Naive thymus-derived CD4-positive, alpha-beta T cell (primary cell): ENCODE measurements at regions of chr4 and their contacts with region 1.

Region 1: GRCh38 chr4:184263910-184264732 is 46.4 kb upstream of the ENPP6 start:
- DNase-seq: peak; percentile 80 to 90 (median 87)
- ATAC-seq: peak; percentile 86
- H3K4me3 ChIP-seq: no peak overlapping the region
- H3K4me3 Mint-ChIP-seq: peak overlapping the region in 1 of 10 donors; percentile 17
- H3K27ac ChIP-seq: no peak overlapping the region
- H3K27ac Mint-ChIP-seq: peak overlapping the region in 6 of 9 donors; percentile 5 to 72 (median 63)
- H3K4me1 ChIP-seq: peaks cover 6 to 14% of the 10 kb centered on the region in 2 donors
- H3K4me1 Mint-ChIP-seq: peaks cover 5 to 54% (median 28%) of the 10 kb centered on the region in 7 donors
- H3K27me3 ChIP-seq: no peaks in the 10 kb centered on the region
- H3K27me3 Mint-ChIP-seq: peaks cover 0 to 2% (median 0%) of the 10 kb centered on the region in 5 donors

Region 2: DNA sequence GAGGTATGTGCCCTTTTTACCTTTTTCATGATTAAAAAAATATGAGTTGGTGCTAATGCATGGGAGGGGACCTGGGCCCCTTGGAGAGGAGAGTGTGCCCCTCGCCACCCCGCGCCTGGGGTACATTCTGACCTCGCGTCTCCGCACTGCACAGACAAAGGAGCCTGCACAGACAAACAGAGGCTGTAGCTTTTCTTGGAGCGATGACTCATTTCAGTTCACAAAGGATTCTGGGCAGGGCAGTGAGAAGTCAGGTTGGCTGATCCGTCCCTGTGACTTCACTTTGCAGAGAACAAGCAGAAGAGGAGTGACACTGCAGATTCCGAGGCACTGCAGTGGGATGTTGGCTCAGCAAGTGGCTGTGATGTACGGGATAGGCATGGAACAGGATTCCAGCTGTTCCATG is 276.1 kb before region 1 on chr4:
- CTCF ChIA-PET with region 1: no interaction called
- POLR2A ChIA-PET with region 1: no interaction called
- intact Hi-C with region 1: no loop called
- DNase-seq: no peak
- ATAC-seq: peak; percentile 71
- H3K4me3 ChIP-seq: no peak overlapping the region
- H3K4me3 Mint-ChIP-seq: peak overlapping the region in 1 of 10 donors; percentile 10
- H3K27ac ChIP-seq: no peak overlapping the region
- H3K27ac Mint-ChIP-seq: no peak overlapping the region
- H3K4me1 ChIP-seq: no peaks in the 10 kb centered on the region
- H3K4me1 Mint-ChIP-seq: no peaks in the 10 kb centered on the region
- H3K27me3 ChIP-seq: no peaks in the 10 kb centered on the region
- H3K27me3 Mint-ChIP-seq: peaks cover 0 to 16% (median 13%) of the 10 kb centered on the region in 5 donors

Region 3: DNA sequence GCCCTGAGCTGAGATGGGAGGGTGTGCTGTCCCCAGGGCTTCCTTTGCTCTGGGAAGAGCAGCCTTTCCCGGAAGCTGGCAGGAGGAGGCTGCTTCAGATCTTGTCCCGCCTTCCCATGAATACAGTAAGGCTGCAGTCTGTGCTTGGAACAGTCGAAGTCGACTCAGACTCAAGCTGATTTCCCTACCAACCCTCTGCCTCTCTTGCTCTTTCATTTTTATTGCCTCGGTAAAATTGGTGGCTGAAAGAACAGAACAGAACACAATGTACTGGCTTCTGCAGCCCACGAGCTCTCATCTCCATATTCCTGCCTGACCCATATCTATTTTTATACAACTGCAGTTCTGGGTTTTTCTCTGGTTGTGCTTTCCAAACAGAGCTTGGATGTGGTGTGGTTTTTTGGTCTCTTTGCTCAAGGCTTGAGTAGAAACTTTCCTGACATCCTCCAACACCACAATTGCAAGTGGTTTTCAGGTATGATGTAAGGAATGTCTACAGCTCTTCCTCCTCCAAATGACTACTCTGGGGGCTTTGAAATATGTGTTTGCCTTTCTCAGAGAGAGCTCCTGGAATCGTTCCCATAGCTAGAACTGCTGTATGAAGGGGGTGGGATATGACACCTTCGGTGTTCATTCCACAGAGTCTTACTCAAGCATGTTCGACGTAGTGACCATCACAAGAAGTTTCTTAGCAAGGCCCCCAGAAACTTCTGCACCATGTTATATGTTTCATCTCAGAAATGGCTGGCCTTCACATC is 107.8 kb before region 1 on chr4:
- CTCF ChIA-PET with region 1: no interaction called
- POLR2A ChIA-PET with region 1: no interaction called
- intact Hi-C with region 1: no loop called
- DNase-seq: no peak
- ATAC-seq: no peak
- H3K4me3 ChIP-seq: no peak overlapping the region
- H3K4me3 Mint-ChIP-seq: no peak overlapping the region
- H3K27ac ChIP-seq: no peak overlapping the region
- H3K27ac Mint-ChIP-seq: no peak overlapping the region
- H3K4me1 ChIP-seq: no peaks in the 10 kb centered on the region
- H3K4me1 Mint-ChIP-seq: no peaks in the 10 kb centered on the region
- H3K27me3 ChIP-seq: peaks cover 0 to 6% of the 10 kb centered on the region in 2 donors
- H3K27me3 Mint-ChIP-seq: peaks cover 26 to 46% (median 34%) of the 10 kb centered on the region in 5 donors

Region 4: GRCh38 chr4:184168406-184169019 is 95.6 kb before region 1 on chr4:
- CTCF ChIA-PET with region 1: no interaction called
- POLR2A ChIA-PET with region 1: no interaction called
- intact Hi-C with region 1: no loop called
- DNase-seq: peak in 7 of 9 donors; percentile 15 to 77 (median 33)
- ATAC-seq: peak; percentile 89
- H3K4me3 ChIP-seq: no peak overlapping the region
- H3K4me3 Mint-ChIP-seq: peak overlapping the region in 2 of 10 donors; percentile 37 to 64
- H3K27ac ChIP-seq: no peak overlapping the region
- H3K27ac Mint-ChIP-seq: no peak overlapping the region
- H3K4me1 ChIP-seq: no peaks in the 10 kb centered on the region
- H3K4me1 Mint-ChIP-seq: peaks cover 0 to 20% (median 3%) of the 10 kb centered on the region in 7 donors
- H3K27me3 ChIP-seq: peaks cover 0 to 3% of the 10 kb centered on the region in 2 donors
- H3K27me3 Mint-ChIP-seq: peaks cover 55 to 76% (median 67%) of the 10 kb centered on the region in 5 donors

Region 5: DNA sequence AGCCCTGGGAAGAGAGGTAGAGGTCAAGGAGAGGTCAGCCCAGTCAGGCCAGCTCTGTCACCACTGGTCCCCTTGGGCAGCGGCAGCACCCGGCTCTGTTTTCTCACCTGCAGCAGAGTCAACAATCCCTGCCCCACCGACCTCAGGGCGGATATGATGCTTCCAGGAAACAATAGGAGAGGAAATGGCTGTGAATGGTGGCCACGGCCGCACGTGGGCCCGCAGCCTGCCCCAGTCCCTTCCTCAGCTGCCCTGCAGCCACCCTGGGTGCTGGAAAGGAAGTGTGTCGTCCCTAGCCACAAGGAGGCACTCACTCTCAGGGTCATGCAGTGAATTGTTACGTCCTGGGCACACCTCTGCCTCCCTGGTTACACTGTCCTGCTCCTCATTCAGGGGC is 46.0 kb after region 1 on chr4:
- CTCF ChIA-PET with region 1: interaction called, 3 read pairs
- POLR2A ChIA-PET with region 1: no interaction called
- intact Hi-C with region 1: loop called in 1 of 2 experiments (anchors 1 kb)
- DNase-seq: peak in 5 of 9 donors; percentile 10 to 29 (median 25)
- ATAC-seq: peak; percentile 80
- H3K4me3 ChIP-seq: no peak overlapping the region
- H3K4me3 Mint-ChIP-seq: peak overlapping the region in 8 of 10 donors; percentile 1 to 73 (median 15)
- H3K27ac ChIP-seq: no peak overlapping the region
- H3K27ac Mint-ChIP-seq: peak overlapping the region; percentile 4 to 77 (median 44)
- H3K4me1 ChIP-seq: peaks cover 6 to 15% of the 10 kb centered on the region in 2 donors
- H3K4me1 Mint-ChIP-seq: peaks cover 22 to 63% (median 29%) of the 10 kb centered on the region in 7 donors
- H3K27me3 ChIP-seq: no peaks in the 10 kb centered on the region
- H3K27me3 Mint-ChIP-seq: no peaks in the 10 kb centered on the region

Region 6: GRCh38 chr4:184417802-184418511 is 153.8 kb after region 1 on chr4:
- CTCF ChIA-PET with region 1: interaction called, 4 read pairs
- POLR2A ChIA-PET with region 1: interaction called, 8 read pairs
- intact Hi-C with region 1: loop called (anchors 1 kb)
- DNase-seq: peak in 2 of 9 donors; percentile 26 to 31
- ATAC-seq: peak; percentile 69
- H3K4me3 ChIP-seq: peak overlapping the region; percentile 64
- H3K4me3 Mint-ChIP-seq: peak overlapping the region; percentile 23 to 94 (median 82)
- H3K27ac ChIP-seq: peak overlapping the region; percentile 74
- H3K27ac Mint-ChIP-seq: peak overlapping the region; percentile 82 to 97 (median 95)
- H3K4me1 ChIP-seq: peaks cover 35 to 52% of the 10 kb centered on the region in 2 donors
- H3K4me1 Mint-ChIP-seq: peaks cover 43 to 80% (median 77%) of the 10 kb centered on the region in 7 donors
- H3K27me3 ChIP-seq: no peaks in the 10 kb centered on the region
- H3K27me3 Mint-ChIP-seq: no peaks in the 10 kb centered on the region

Region 7: GRCh38 chr4:184825896-184826690 is 562.0 kb after region 1 on chr4 and contains the start of gene ACSL1:
- CTCF ChIA-PET with region 1: no interaction called
- POLR2A ChIA-PET with region 1: no interaction called
- intact Hi-C with region 1: loop called (anchors 1 to 2 kb)
- DNase-seq: peak; percentile 63 to 83 (median 75)
- ATAC-seq: peak; percentile 95
- H3K4me3 ChIP-seq: peak within 1 kb of the TSS; percentile 59
- H3K4me3 Mint-ChIP-seq: peak within 1 kb of the TSS; percentile 89 to 94 (median 91)
- H3K27ac ChIP-seq: peak within 1 kb of the TSS; percentile 73
- H3K27ac Mint-ChIP-seq: peak within 1 kb of the TSS; percentile 79 to 91 (median 90)
- H3K4me1 ChIP-seq: peaks cover 4 to 7% of the 10 kb centered on the region in 2 donors
- H3K4me1 Mint-ChIP-seq: peaks cover 21 to 46% (median 33%) of the 10 kb centered on the region in 7 donors
- H3K27me3 ChIP-seq: no peaks in the 10 kb centered on the region
- H3K27me3 Mint-ChIP-seq: peaks cover 0 to 25% (median 0%) of the 10 kb centered on the region in 5 donors
- total RNA-seq, gene ACSL1: 9.5 to 80.1 (median 20.4) TPM

Region 8: GRCh38 chr4:185011408-185011807 is 747.3 kb after region 1 on chr4:
- CTCF ChIA-PET with region 1: no interaction called
- POLR2A ChIA-PET with region 1: no interaction called
- intact Hi-C with region 1: loop called in 1 of 2 experiments (anchors 1 kb)
- DNase-seq: peak in 4 of 9 donors; percentile 11 to 22 (median 12)
- ATAC-seq: no peak
- H3K4me3 ChIP-seq: no peak overlapping the region
- H3K4me3 Mint-ChIP-seq: no peak overlapping the region
- H3K27ac ChIP-seq: no peak overlapping the region
- H3K27ac Mint-ChIP-seq: no peak overlapping the region
- H3K4me1 ChIP-seq: no peaks in the 10 kb centered on the region
- H3K4me1 Mint-ChIP-seq: peaks cover 0 to 17% (median 7%) of the 10 kb centered on the region in 7 donors
- H3K27me3 ChIP-seq: no peaks in the 10 kb centered on the region
- H3K27me3 Mint-ChIP-seq: peaks cover 74 to 96% (median 76%) of the 10 kb centered on the region in 5 donors

Region 9: DNA sequence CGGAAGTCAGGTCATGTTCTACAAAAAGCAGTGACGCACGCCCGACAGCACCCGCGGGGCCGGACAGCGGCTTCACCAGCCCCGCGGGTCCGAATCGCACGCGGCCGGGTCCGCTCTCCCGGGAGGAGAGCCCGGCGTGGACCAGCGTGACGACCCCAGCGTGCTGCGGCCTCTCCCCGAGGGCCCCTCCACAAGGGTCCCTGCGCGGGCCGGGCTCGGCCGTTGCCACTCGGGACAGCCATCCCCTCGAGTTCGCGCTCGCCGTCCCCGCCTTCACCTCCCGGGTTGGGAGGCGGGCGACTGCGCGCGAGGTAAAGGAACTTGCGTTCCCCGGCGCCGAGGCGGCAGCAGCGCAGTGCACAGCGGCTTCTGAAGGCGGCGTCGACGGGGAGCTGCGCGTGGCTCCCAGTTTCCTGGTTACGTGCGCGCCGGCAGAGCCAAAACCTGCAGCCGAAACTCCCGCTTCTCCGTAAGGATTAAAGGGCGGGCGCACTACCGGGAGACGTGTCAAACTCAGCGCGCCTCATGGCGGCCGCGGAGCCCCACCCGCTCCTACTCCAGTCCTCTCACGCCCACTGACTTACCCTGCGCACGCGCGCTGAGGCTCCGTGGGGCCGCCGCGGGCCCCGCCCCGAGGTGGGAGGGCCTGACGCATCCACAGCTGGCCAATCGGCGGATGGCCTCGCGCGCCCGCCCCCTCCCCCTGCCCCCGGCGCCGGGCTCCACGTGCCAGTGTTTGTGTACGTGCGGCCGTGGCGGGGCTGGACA is 1132.0 kb after region 1 on chr4:
- CTCF ChIA-PET with region 1: no interaction called
- POLR2A ChIA-PET with region 1: no interaction called
- intact Hi-C with region 1: loop called in 1 of 2 experiments (anchors 5 kb)
- DNase-seq: peak; percentile 93 to 100 (median 97)
- ATAC-seq: peak; percentile 97
- H3K4me3 ChIP-seq: peak overlapping the region; percentile 69
- H3K4me3 Mint-ChIP-seq: peak overlapping the region; percentile 82 to 100 (median 97)
- H3K27ac ChIP-seq: peak overlapping the region; percentile 97
- H3K27ac Mint-ChIP-seq: peak overlapping the region; percentile 90 to 100 (median 99)
- H3K4me1 ChIP-seq: peaks cover 12 to 15% of the 10 kb centered on the region in 2 donors
- H3K4me1 Mint-ChIP-seq: peaks cover 14 to 57% (median 27%) of the 10 kb centered on the region in 7 donors
- H3K27me3 ChIP-seq: no peaks in the 10 kb centered on the region
- H3K27me3 Mint-ChIP-seq: no peaks in the 10 kb centered on the region